ENCODE measurements at regions of chr12 and their contacts with region 1.

Region 1: DNA sequence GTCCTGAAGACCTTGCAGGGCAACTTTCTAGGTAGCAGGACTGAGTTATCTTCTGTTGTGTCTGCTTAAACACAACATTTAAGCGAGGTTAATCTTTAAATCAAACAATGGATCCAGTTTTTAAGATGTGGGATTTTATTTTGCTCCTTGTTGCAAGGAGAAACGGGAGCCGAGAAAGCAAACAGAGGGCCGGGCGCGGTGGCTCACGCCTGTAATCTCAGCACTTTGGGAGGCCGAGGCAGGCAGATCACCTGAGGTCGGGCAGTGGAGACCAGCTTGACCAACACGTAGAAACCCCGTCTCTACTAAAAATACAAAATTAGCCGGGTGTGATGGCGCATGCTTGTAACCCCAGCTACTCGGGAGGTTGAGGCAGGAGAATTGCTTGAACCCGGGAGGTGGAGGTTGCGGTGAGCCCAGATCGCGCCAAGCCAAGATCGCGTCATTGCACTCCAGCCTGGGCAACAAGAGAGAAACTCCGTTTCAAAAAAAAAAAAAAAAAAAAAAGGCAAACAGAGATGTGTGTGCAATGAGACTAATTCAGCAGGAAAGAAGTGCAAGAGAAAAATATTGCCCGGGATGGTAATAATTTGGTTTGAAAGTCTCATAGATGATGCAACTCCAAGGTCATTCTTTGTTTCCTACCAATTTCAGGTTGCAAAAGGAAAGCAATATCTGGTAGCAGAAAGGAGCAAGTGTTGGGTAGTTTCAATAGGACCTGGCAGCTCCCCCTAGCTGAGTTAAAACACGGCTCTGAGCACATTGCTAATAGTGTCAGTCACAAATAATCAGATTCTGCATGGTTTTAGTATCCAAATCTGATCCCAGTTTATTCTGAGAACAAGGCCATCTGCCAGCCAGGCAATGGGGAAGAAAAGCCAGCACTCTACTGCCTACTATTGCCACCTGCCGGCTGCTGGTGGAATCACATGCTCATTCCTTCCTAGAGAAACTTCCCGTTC is 141.4 kb downstream of the PPM1H start:
- DNase-seq: peak; percentile 87
- H3K4me3 ChIP-seq: no peak overlapping the region
- H3K27ac ChIP-seq: no peak overlapping the region
- H3K4me1 ChIP-seq: peaks cover 0 to 11% (median 0%) of the 10 kb centered on the region in 4 donors
- H3K27me3 ChIP-seq: no peaks in the 10 kb centered on the region
- CTCF ChIP-seq: peak; percentile 94 to 96 (median 95)
- EP300 ChIP-seq: no peak
- POLR2A ChIP-seq: no peak

Region 2: GRCh38 chr12:62581288-62582064 is 212.1 kb before region 1 on chr12:
- in situ Hi-C with region 1: loop called in 3 of 4 experiments (anchors 5 to 10 kb)
- intact Hi-C with region 1: loop called (anchors 5 kb)
- DNase-seq: no peak
- H3K4me3 ChIP-seq: no peak overlapping the region
- H3K27ac ChIP-seq: no peak overlapping the region
- H3K4me1 ChIP-seq: no peaks in the 10 kb centered on the region
- H3K27me3 ChIP-seq: no peaks in the 10 kb centered on the region
- CTCF ChIP-seq: peak; percentile 64 to 69 (median 68)
- EP300 ChIP-seq: no peak
- POLR2A ChIP-seq: no peak

Region 3: GRCh38 chr12:62588916-62589315 is 204.6 kb before region 1 on chr12:
- in situ Hi-C with region 1: loop called (anchors 5 to 10 kb)
- intact Hi-C with region 1: loop called (anchors 5 kb)
- DNase-seq: no peak
- H3K4me3 ChIP-seq: no peak overlapping the region
- H3K27ac ChIP-seq: no peak overlapping the region
- H3K4me1 ChIP-seq: no peaks in the 10 kb centered on the region
- H3K27me3 ChIP-seq: no peaks in the 10 kb centered on the region
- CTCF ChIP-seq: no peak
- EP300 ChIP-seq: no peak
- POLR2A ChIP-seq: no peak

Region 4: GRCh38 chr12:62760779-62761178 is 32.8 kb before region 1 on chr12:
- in situ Hi-C with region 1: no loop called
- intact Hi-C with region 1: no loop called
- DNase-seq: no peak
- H3K4me3 ChIP-seq: no peak overlapping the region
- H3K27ac ChIP-seq: peak overlapping the region; percentile 42 to 69 (median 50)
- H3K4me1 ChIP-seq: peaks cover 0 to 36% (median 29%) of the 10 kb centered on the region in 4 donors
- H3K27me3 ChIP-seq: no peaks in the 10 kb centered on the region
- CTCF ChIP-seq: no peak
- EP300 ChIP-seq: no peak
- POLR2A ChIP-seq: no peak